ENCODE measurements at regions of chr20 and their contacts with region 1.

Region 1: DNA sequence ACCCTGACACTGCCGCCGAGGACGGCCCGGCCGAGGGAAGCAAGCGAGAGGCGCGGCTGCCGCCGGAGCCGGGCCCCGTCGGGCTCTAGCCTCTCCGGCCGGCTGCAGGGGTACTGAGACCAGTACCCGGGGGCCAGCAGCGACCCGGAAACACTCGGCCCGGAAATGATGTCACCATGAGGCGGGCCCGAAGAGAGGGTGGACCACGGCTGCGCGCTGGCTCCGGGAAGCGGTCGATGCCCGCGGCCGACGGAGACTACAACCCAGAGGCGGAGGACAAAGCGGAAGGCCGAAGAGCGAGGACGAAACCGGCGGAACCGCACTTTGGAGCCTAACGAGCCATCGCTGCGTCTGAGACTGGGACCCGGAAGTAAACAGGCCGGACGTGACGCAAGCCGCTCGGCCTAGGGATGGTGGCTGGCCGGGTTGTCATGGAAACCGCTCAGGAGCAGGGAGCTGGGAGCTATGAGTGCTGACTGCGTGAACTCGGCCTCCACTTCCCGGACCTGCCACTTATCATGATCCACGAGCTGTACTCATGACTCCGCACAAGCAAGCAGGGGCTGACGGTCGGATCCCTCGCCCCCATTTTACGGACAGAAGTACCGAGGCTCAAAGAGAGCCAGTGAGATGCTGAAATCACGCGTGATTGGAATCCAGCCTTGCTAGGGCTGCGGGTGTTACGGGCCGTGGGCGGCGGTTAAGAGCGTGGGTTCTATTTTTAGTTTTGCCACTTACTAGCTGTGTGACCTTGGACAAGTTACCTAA is at the start of gene SPATA2:
- DNase-seq: peak; percentile 92 to 98 (median 94)
- ATAC-seq: peak; percentile 90
- H3K4me3 ChIP-seq: peak within 1 kb of the TSS; percentile 93
- H3K27ac ChIP-seq: peak within 1 kb of the TSS; percentile 100
- H3K4me1 ChIP-seq: peaks cover 16 to 17% of the 10 kb centered on the region in 2 experiments; a peak in 4 of 5 replicates
- H3K27me3 ChIP-seq: no peaks in the 10 kb centered on the region
- CTCF ChIP-seq: no peak
- EP300 ChIP-seq: peak; percentile 13; the same call in 1 of the 2 replicates
- POLR2A ChIP-seq: peak; percentile 80
- RAD21 ChIP-seq: no peak
- polyA plus RNA-seq, gene SPATA2: 0.46 to 0.59 TPM

Region 2: GRCh38 chr20:49901588-49901987 is 14.0 kb before region 1 on chr20:
- CTCF ChIA-PET with region 1: no interaction called
- POLR2A ChIA-PET with region 1: interaction called, 16 read pairs
- in situ Hi-C with region 1: no loop called
- intact Hi-C with region 1: no loop called
- DNase-seq: no peak
- ATAC-seq: no peak
- H3K4me3 ChIP-seq: no peak overlapping the region
- H3K27ac ChIP-seq: no peak overlapping the region
- H3K4me1 ChIP-seq: peaks cover 0 to 12% of the 10 kb centered on the region in 2 experiments; a peak in 1 of 5 replicates
- H3K27me3 ChIP-seq: no peaks in the 10 kb centered on the region
- CTCF ChIP-seq: no peak
- EP300 ChIP-seq: no peak
- POLR2A ChIP-seq: no peak
- RAD21 ChIP-seq: no peak

Region 3: DNA sequence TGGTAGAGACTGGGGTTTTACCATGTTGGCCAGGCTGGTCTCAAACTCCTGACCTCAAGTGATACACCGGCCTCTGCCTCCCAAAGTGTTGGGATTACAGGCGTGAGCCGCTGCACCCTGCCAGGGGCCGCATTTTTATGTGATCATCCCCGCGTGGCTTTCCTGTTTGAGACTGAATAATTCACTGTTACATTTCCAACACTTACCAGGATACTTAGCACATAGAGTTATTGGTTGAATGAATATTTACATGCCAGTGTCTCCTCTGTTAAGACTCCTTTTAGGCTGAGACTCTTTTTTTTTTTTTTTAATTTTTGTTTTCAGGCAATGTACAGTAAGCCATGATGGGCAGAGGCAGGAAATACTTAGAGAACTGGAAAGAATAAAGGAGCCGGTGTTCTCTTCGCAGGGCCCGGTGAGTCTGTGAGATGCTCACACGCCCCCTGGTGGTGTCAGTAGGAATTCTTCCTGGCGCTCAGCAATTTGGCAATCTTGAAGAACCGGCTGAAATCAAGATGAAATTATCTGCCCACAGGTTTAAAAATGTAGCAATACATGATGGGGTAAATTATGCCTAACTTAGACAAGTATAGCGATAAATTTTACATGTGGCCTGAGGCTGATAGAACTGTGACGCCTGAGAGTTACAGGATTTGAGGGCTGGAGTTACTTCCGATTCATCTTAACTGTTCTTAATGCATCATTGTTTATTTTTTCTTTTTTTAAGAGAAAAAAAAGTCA is 13.0 kb after region 1 on chr20:
- CTCF ChIA-PET with region 1: no interaction called
- POLR2A ChIA-PET with region 1: interaction called, 3 read pairs
- in situ Hi-C with region 1: no loop called
- intact Hi-C with region 1: loop called (anchors 2 kb)
- DNase-seq: peak; percentile 76 to 88 (median 80)
- ATAC-seq: peak; percentile 95
- H3K4me3 ChIP-seq: no peak overlapping the region
- H3K27ac ChIP-seq: no peak overlapping the region
- H3K4me1 ChIP-seq: no peaks in the 10 kb centered on the region; a peak in 2 of 5 replicates
- H3K27me3 ChIP-seq: no peaks in the 10 kb centered on the region
- CTCF ChIP-seq: peak; percentile 85 to 95 (median 91)
- EP300 ChIP-seq: 0 out of 2 replicates have a peak, but pooled peaks have one; percentile 11
- POLR2A ChIP-seq: no peak
- RAD21 ChIP-seq: peak; percentile 66 to 82

Region 4: DNA sequence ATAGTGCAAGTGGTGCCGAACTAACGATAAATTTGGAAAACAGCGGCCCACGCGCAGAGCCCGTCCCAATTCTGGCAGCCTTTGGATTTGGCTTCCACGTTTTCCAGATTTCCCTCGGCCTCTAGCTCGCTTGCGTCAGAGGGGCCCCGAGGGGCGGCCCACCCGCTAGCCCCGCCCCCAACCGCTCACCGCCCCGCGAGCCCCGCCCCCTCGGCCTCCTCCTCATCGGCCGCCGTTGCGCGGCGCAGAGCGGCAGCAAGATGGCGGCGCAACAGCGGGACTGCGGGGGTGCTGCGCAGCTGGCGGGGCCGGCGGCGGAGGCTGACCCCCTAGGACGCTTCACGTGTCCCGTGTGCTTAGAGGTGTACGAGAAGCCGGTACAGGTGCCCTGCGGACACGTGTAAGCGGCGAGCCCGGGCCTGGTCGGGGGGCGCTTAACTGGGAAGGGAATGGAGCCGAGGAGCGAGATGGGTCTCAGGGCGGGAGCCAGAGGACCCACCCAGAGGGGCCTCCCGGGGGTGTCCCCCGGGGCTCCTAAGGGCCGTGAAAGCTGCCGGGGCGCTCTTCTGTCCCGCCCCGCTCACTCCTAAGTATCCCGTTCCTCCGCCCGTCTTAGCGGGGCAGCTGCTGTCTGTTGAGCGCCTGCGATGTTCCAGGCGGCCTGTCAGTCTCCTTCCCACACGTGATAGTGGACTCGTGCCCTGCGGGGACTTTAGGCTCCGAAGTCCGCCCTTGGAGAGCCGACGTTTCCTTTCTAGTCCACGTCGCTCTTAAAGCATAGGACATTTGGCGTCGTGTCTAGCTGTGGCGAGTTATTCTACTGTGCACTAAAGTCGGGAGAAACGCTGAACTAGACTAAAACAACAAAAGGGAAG is 20.8 kb after region 1 on chr20 and contains the start of gene RNF114:
- CTCF ChIA-PET with region 1: no interaction called
- POLR2A ChIA-PET with region 1: interaction called, 16 read pairs
- in situ Hi-C with region 1: no loop called
- intact Hi-C with region 1: no loop called
- DNase-seq: peak; percentile 94 to 99 (median 99)
- ATAC-seq: peak; percentile 93
- H3K4me3 ChIP-seq: peak within 1 kb of the TSS; percentile 95
- H3K27ac ChIP-seq: peak within 1 kb of the TSS; percentile 82
- H3K4me1 ChIP-seq: peaks cover 22 to 28% of the 10 kb centered on the region in 2 experiments
- H3K27me3 ChIP-seq: no peaks in the 10 kb centered on the region
- CTCF ChIP-seq: no peak
- EP300 ChIP-seq: peak; percentile 43; the same call in 1 of the 2 replicates
- POLR2A ChIP-seq: peak; percentile 87
- RAD21 ChIP-seq: no peak
- polyA plus RNA-seq, gene RNF114: 38.6 to 64.5 TPM